T-cell (primary cell): ENCODE measurements at regions of chr6 and their contacts with region 1.

Region 1: DNA sequence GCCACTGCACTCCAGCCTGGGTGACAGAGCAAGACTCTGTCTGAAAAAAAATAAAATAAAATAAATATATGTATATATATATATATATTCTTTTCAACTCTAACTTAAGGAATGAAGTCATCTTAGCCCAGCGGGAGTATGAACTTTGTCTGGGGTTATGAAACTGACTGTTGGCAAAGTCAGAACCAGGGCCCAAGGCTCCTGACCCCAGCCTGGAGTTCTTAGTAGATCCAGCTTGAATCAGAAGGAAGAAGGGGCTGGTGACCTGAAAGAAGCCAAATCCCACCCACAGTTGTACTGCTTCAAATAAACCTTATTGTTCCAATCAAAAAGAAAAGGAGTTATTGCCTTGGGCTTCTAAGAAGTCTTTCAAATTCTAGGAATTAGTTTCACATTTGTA is 83.1 kb upstream of the MAP7 start:
- DNase-seq: no peak
- ATAC-seq: no peak
- H3K4me3 ChIP-seq: no peak overlapping the region
- H3K4me3 Mint-ChIP-seq: no peak overlapping the region
- H3K27ac ChIP-seq: no peak overlapping the region
- H3K27ac Mint-ChIP-seq: no peak overlapping the region
- H3K4me1 ChIP-seq: no peaks in the 10 kb centered on the region
- H3K4me1 Mint-ChIP-seq: no peaks in the 10 kb centered on the region
- H3K27me3 ChIP-seq: no peaks in the 10 kb centered on the region
- H3K27me3 Mint-ChIP-seq: no peaks in the 10 kb centered on the region

Region 2: GRCh38 chr6:135030532-135031178 is 1602.7 kb before region 1 on chr6:
- CTCF ChIA-PET with region 1: no interaction called
- POLR2A ChIA-PET with region 1: no interaction called
- DNase-seq: no peak
- ATAC-seq: peak in 1 of 4 experiments; percentile 45
- H3K4me3 ChIP-seq: no peak overlapping the region
- H3K4me3 Mint-ChIP-seq: peak overlapping the region; percentile 21 to 64 (median 51)
- H3K27ac ChIP-seq: peak overlapping the region; percentile 70
- H3K27ac Mint-ChIP-seq: peak overlapping the region; percentile 79 to 93
- H3K4me1 ChIP-seq: peaks cover 4 to 5% of the 10 kb centered on the region in 2 experiments
- H3K4me1 Mint-ChIP-seq: peaks cover 67 to 74% (median 68%) of the 10 kb centered on the region in 3 donors
- H3K27me3 ChIP-seq: no peaks in the 10 kb centered on the region
- H3K27me3 Mint-ChIP-seq: no peaks in the 10 kb centered on the region

Region 3: GRCh38 chr6:136244061-136244616 is 389.2 kb before region 1 on chr6:
- CTCF ChIA-PET with region 1: interaction called in 1 of 2 experiments, 11 read pairs
- POLR2A ChIA-PET with region 1: no interaction called
- DNase-seq: no peak
- ATAC-seq: no peak
- H3K4me3 ChIP-seq: no peak overlapping the region
- H3K4me3 Mint-ChIP-seq: no peak overlapping the region
- H3K27ac ChIP-seq: no peak overlapping the region
- H3K27ac Mint-ChIP-seq: no peak overlapping the region
- H3K4me1 ChIP-seq: peaks cover 0 to 1% of the 10 kb centered on the region in 2 experiments
- H3K4me1 Mint-ChIP-seq: peaks cover 5 to 6% (median 5%) of the 10 kb centered on the region in 3 donors
- H3K27me3 ChIP-seq: no peaks in the 10 kb centered on the region
- H3K27me3 Mint-ChIP-seq: no peaks in the 10 kb centered on the region

Region 4: DNA sequence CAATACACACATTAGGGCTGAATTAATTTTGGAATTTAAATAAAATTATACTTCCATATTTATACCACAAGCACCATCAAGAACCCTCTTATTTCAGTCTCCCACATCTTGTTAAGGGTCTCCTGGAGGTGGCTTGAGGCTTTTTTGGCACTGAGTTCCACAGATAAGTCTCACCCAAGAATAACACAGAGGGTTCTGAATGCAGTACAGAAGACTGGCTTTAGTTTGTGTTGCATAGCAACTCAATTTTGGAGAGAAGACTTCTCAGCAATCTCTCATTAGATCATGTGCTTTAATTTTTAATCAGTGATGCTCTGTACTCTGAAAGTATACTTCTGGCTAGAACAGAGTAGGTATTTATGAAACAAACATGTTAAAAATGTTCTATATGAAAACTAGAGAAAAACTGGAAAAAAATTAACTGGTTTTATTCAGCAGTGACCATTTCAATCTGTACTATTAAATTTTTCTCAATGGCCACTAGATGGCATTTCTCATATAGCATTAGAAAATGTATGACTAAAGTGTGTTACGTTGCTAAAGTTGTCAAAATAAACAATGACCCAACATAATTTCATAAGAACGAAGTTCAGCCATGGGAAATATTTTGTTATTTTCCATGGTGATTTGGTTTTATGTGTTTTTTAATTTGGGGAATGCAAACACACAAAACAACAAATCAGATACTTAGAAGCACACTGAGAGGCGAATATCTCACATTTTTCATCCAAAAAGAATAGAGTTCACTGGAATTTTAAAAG is 50.5 kb before region 1 on chr6:
- CTCF ChIA-PET with region 1: no interaction called
- POLR2A ChIA-PET with region 1: no interaction called
- DNase-seq: no peak
- ATAC-seq: no peak
- H3K4me3 ChIP-seq: no peak overlapping the region
- H3K4me3 Mint-ChIP-seq: no peak overlapping the region
- H3K27ac ChIP-seq: no peak overlapping the region
- H3K27ac Mint-ChIP-seq: no peak overlapping the region
- H3K4me1 ChIP-seq: no peaks in the 10 kb centered on the region
- H3K4me1 Mint-ChIP-seq: no peaks in the 10 kb centered on the region
- H3K27me3 ChIP-seq: no peaks in the 10 kb centered on the region
- H3K27me3 Mint-ChIP-seq: no peaks in the 10 kb centered on the region

Region 5: DNA sequence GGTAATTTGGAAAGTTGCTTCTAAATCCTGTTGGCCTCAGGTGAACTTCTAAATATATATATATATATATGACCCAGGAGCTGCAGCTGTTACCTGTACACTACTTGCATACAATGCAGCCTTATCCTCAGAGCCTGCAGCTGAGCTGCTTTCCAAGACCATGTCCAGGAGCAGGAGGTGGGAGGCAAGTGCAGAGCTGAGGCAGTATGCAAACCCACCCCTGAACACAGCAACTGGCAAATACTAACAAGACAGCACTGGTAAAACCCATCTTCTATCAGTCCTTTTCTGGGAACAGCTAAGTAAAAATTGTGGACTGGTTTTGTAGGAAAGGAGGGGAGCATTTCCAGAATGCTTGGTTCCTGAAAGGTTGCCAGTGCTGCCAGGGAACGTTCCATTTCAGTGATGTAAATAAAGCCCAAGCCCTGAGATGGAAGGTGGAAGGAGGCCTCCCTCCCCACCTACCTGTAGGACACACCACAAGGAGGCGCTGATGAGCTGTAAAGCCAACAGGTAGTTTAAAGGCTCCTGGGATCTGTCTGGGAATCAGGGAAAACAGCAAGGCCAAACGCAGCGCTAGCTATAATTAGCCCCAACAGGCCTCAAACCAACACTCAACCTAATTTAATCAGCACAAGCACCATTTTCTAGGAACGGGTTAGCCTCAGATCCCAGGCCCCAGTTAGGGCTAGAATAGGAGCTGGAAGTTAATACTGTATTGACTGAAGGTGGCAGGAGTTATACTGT is 10.7 kb after region 1 on chr6:
- CTCF ChIA-PET with region 1: interaction called, 10 to 19 read pairs
- POLR2A ChIA-PET with region 1: no interaction called
- DNase-seq: peak; percentile 43 to 88 (median 73)
- ATAC-seq: peak; percentile 66 to 77 (median 71)
- H3K4me3 ChIP-seq: no peak overlapping the region
- H3K4me3 Mint-ChIP-seq: no peak overlapping the region
- H3K27ac ChIP-seq: no peak overlapping the region
- H3K27ac Mint-ChIP-seq: peak overlapping the region in 1 of 2 donors; percentile 12
- H3K4me1 ChIP-seq: peaks cover 0 to 16% of the 10 kb centered on the region in 2 experiments
- H3K4me1 Mint-ChIP-seq: peaks cover 0 to 5% (median 2%) of the 10 kb centered on the region in 3 donors
- H3K27me3 ChIP-seq: no peaks in the 10 kb centered on the region
- H3K27me3 Mint-ChIP-seq: no peaks in the 10 kb centered on the region

Region 6: DNA sequence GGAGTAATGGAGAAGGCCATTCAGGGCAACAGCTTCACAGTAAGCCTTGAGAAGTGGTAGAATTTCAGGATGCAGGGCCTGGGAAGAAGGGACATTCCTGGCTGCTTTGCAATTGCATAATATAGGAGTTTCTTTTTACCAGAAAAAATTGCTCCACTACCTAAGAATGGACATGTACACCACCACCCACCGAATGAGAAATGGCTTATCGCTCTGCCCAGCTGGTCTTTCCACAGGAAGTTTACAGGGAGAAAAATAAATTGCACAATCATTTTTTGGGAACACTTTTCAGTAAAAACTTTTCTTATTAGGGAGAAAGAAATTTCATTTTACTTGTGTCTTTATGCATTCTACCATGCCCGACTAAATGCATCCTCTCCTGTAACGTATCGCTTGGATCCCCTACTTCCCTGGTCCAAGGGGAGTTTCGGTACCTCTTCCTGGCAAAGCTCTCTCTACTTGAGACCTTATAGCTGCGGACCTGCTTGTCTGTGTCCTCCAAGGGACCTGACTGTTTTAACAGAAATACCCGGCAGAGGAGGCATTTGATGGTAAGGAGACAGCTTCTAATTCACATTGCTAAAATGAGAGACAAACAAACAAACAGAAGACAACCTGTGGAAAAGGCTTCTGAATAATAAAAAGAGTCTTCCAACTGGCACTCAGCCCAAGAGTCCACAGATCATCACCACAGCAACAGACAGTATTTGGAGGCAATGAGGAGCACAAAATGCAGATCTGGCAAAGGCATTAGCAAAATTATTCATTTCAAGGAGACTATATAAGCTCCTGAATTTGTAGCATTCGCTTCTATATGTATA is 104.7 kb after region 1 on chr6:
- CTCF ChIA-PET with region 1: no interaction called
- POLR2A ChIA-PET with region 1: no interaction called
- DNase-seq: no peak
- ATAC-seq: no peak
- H3K4me3 ChIP-seq: no peak overlapping the region
- H3K4me3 Mint-ChIP-seq: no peak overlapping the region
- H3K27ac ChIP-seq: no peak overlapping the region
- H3K27ac Mint-ChIP-seq: no peak overlapping the region
- H3K4me1 ChIP-seq: peaks cover 0 to 11% of the 10 kb centered on the region in 2 experiments
- H3K4me1 Mint-ChIP-seq: peaks cover 28 to 65% (median 46%) of the 10 kb centered on the region in 3 donors
- H3K27me3 ChIP-seq: no peaks in the 10 kb centered on the region
- H3K27me3 Mint-ChIP-seq: no peaks in the 10 kb centered on the region

Region 7: DNA sequence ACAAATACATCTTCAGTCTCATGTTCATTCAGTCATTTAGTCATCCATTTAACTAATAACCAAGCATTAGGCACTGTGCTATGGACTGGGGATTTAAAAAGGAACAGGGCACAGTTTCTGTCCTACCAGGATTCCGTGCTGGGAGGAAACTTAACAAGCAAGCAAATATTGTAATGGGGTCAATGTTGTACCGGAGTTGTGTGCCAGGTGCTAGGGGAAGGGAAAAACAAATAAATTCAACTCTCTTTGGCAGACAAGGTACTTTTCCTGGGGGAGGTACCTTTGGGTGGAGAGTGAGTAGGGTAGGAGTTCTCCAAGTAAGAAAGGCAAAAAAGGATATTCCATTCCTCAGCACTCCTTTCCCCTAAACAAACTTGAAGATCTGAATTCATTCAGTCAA is 770.5 kb after region 1 on chr6:
- CTCF ChIA-PET with region 1: no interaction called
- POLR2A ChIA-PET with region 1: no interaction called
- DNase-seq: no peak
- ATAC-seq: no peak
- H3K4me3 ChIP-seq: no peak overlapping the region
- H3K4me3 Mint-ChIP-seq: no peak overlapping the region
- H3K27ac ChIP-seq: no peak overlapping the region
- H3K27ac Mint-ChIP-seq: no peak overlapping the region
- H3K4me1 ChIP-seq: peaks cover 0 to 4% of the 10 kb centered on the region in 2 experiments
- H3K4me1 Mint-ChIP-seq: peaks cover 0 to 29% (median 5%) of the 10 kb centered on the region in 3 donors
- H3K27me3 ChIP-seq: no peaks in the 10 kb centered on the region
- H3K27me3 Mint-ChIP-seq: no peaks in the 10 kb centered on the region